Naive thymus-derived CD4-positive, alpha-beta T cell (primary cell): ENCODE measurements at regions of chr2 and their contacts with region 1.

Region 1: GRCh38 chr2:166127217-166128155 is at the start of gene SCN1A:
- DNase-seq: peak in 6 of 9 donors; percentile 4 to 53 (median 29)
- ATAC-seq: peak; percentile 63
- H3K4me3 ChIP-seq: no peak within 1 kb of the TSS
- H3K4me3 Mint-ChIP-seq: peak within 1 kb of the TSS in 1 of 10 donors; percentile 51
- H3K27ac ChIP-seq: no peak within 1 kb of the TSS
- H3K27ac Mint-ChIP-seq: no peak within 1 kb of the TSS
- H3K4me1 ChIP-seq: no peaks in the 10 kb centered on the region
- H3K4me1 Mint-ChIP-seq: peaks cover 0 to 5% (median 4%) of the 10 kb centered on the region in 7 donors
- H3K27me3 ChIP-seq: no peaks in the 10 kb centered on the region
- H3K27me3 Mint-ChIP-seq: peaks cover 10 to 29% (median 25%) of the 10 kb centered on the region in 5 donors
- total RNA-seq, gene SCN1A: not detected

Region 2: DNA sequence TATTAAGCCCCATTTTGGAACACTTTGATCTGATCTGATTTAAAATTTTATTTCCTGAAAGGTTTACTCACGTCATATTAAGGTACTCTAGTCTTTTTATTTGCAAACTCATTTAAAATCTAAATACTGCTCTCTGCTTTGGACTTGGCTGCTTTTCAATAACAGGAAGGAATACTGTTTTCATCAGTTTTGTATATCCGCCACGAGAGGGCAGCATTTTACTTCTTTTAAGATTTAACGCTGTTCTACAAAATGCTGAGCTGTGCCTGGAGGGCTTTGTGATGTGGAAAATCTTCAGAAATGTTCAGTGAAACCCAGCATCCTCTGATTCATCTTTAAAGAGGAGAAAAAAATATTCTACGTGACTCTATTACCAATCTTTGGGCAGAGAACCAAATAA is 1134.7 kb before region 1 on chr2:
- CTCF ChIA-PET with region 1: interaction called, 3 read pairs
- POLR2A ChIA-PET with region 1: no interaction called
- intact Hi-C with region 1: loop called (anchors 1 kb)
- DNase-seq: peak in 7 of 9 donors; percentile 29 to 54 (median 42)
- ATAC-seq: peak; percentile 68
- H3K4me3 ChIP-seq: no peak overlapping the region
- H3K4me3 Mint-ChIP-seq: no peak overlapping the region
- H3K27ac ChIP-seq: no peak overlapping the region
- H3K27ac Mint-ChIP-seq: no peak overlapping the region
- H3K4me1 ChIP-seq: no peaks in the 10 kb centered on the region
- H3K4me1 Mint-ChIP-seq: peaks cover 10 to 36% (median 16%) of the 10 kb centered on the region in 7 donors
- H3K27me3 ChIP-seq: no peaks in the 10 kb centered on the region
- H3K27me3 Mint-ChIP-seq: no peaks in the 10 kb centered on the region

Region 3: GRCh38 chr2:165401285-165401852 is 726.1 kb before region 1 on chr2:
- CTCF ChIA-PET with region 1: no interaction called
- POLR2A ChIA-PET with region 1: no interaction called
- intact Hi-C with region 1: loop called (anchors 1 kb)
- DNase-seq: peak in 7 of 9 donors; percentile 8 to 56 (median 39)
- ATAC-seq: peak; percentile 60
- H3K4me3 ChIP-seq: no peak overlapping the region
- H3K4me3 Mint-ChIP-seq: no peak overlapping the region
- H3K27ac ChIP-seq: no peak overlapping the region
- H3K27ac Mint-ChIP-seq: no peak overlapping the region
- H3K4me1 ChIP-seq: no peaks in the 10 kb centered on the region
- H3K4me1 Mint-ChIP-seq: peaks cover 0 to 3% (median 0%) of the 10 kb centered on the region in 7 donors
- H3K27me3 ChIP-seq: no peaks in the 10 kb centered on the region
- H3K27me3 Mint-ChIP-seq: peaks cover 14 to 35% (median 26%) of the 10 kb centered on the region in 5 donors

Region 4: DNA sequence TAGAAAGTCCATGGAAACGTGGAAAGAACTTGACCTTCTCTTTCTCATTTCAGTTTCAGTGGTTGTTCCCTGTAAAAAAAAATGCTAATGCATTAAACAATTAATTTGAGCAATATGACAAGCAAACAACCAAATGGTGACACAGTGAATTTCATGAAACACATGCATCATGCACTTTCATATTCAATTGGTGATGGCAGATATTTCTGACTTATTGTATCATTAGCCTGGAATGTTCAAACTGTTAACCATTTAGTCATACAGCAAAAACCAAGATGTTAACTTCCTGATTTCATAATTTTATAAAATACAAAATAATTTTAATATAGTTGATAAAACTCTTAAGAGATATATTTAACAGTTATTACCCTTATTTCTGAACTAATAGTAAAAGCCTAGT is 85.1 kb before region 1 on chr2:
- CTCF ChIA-PET with region 1: no interaction called
- POLR2A ChIA-PET with region 1: no interaction called
- intact Hi-C with region 1: no loop called
- DNase-seq: no peak
- ATAC-seq: no peak
- H3K4me3 ChIP-seq: no peak overlapping the region
- H3K4me3 Mint-ChIP-seq: no peak overlapping the region
- H3K27ac ChIP-seq: no peak overlapping the region
- H3K27ac Mint-ChIP-seq: no peak overlapping the region
- H3K4me1 ChIP-seq: no peaks in the 10 kb centered on the region
- H3K4me1 Mint-ChIP-seq: no peaks in the 10 kb centered on the region
- H3K27me3 ChIP-seq: no peaks in the 10 kb centered on the region
- H3K27me3 Mint-ChIP-seq: peaks cover 0 to 14% (median 5%) of the 10 kb centered on the region in 5 donors

Region 5: DNA sequence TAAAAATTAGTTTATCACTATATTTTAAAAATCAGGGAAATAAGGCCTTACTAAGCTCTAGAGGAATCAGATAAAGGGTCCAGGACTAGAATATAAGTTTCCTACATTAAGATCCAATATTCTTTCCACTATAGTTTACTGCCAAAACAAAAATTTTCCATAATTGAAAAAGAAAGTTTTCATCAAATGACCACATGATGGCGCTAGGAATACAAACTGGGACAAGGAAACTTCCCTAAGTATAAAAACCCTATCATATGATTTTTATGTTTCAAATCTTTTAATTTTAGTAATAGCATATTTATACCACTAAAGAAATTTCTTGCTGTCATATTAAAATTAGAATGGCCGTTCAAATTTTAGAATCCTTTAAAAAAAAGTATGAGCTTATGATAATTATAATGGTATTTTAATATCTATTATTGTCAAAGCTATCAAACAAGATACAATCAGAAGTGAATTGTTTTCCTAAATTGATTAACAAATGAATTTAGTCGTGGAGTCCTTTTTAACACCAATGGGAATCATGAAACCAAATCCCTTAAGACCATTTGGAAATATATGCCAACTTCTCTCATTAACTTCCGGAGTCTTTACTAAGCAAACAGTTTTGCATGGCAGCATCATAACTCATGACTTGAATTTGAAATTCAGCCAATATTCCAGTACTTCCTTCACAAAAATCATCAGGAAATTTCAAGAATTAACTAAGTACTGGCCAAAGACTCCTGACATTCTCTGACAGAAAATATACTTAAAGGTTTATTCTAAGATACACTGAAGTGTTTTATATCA is 69.9 kb before region 1 on chr2:
- CTCF ChIA-PET with region 1: no interaction called
- POLR2A ChIA-PET with region 1: no interaction called
- intact Hi-C with region 1: loop called in 1 of 2 experiments (anchors 2 kb)
- DNase-seq: no peak
- ATAC-seq: no peak
- H3K4me3 ChIP-seq: no peak overlapping the region
- H3K4me3 Mint-ChIP-seq: no peak overlapping the region
- H3K27ac ChIP-seq: no peak overlapping the region
- H3K27ac Mint-ChIP-seq: no peak overlapping the region
- H3K4me1 ChIP-seq: no peaks in the 10 kb centered on the region
- H3K4me1 Mint-ChIP-seq: no peaks in the 10 kb centered on the region
- H3K27me3 ChIP-seq: no peaks in the 10 kb centered on the region
- H3K27me3 Mint-ChIP-seq: no peaks in the 10 kb centered on the region